ENCODE measurements at regions of chr14 and their contacts with region 1.

Region 1: DNA sequence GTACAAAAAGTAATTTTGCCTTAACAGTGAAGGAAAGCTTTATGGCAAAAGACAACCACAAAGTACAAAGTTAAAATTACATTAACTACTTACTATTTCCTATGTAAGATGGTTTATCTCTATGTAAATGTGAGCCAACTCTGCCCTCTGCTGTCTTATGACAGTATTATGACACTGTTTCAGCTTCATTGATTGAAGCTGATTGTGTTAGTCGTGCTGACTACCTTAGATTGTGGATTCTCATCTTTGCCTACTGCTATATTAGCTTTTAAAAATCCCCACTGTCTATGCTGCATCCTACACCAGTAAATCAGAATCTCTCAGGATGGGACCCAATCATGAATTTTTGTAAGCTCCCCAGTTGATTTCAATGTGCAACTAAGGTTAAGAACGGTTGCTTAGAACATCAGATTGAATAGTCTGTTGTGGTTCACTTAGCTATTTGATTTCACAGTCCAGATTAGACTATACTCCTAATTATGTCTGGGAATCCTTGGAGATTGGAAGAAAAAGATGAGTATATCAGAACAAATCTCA is 12.2 kb upstream of the SPTB start:
- DNase-seq: peak; percentile 85
- H3K4me3 Mint-ChIP-seq: no peak overlapping the region
- H3K27ac Mint-ChIP-seq: no peak overlapping the region
- H3K4me1 Mint-ChIP-seq: peaks cover 2% of the 10 kb centered on the region
- H3K27me3 Mint-ChIP-seq: peaks cover 36% of the 10 kb centered on the region

Region 2: GRCh38 chr14:64671591-64671990 is 220.3 kb before region 1 on chr14:
- intact Hi-C with region 1: loop called (anchors 5 kb)
- DNase-seq: peak; percentile 78
- H3K4me3 Mint-ChIP-seq: no peak overlapping the region
- H3K27ac Mint-ChIP-seq: no peak overlapping the region
- H3K4me1 Mint-ChIP-seq: peaks cover 32% of the 10 kb centered on the region
- H3K27me3 Mint-ChIP-seq: peaks cover 18% of the 10 kb centered on the region

Region 3: DNA sequence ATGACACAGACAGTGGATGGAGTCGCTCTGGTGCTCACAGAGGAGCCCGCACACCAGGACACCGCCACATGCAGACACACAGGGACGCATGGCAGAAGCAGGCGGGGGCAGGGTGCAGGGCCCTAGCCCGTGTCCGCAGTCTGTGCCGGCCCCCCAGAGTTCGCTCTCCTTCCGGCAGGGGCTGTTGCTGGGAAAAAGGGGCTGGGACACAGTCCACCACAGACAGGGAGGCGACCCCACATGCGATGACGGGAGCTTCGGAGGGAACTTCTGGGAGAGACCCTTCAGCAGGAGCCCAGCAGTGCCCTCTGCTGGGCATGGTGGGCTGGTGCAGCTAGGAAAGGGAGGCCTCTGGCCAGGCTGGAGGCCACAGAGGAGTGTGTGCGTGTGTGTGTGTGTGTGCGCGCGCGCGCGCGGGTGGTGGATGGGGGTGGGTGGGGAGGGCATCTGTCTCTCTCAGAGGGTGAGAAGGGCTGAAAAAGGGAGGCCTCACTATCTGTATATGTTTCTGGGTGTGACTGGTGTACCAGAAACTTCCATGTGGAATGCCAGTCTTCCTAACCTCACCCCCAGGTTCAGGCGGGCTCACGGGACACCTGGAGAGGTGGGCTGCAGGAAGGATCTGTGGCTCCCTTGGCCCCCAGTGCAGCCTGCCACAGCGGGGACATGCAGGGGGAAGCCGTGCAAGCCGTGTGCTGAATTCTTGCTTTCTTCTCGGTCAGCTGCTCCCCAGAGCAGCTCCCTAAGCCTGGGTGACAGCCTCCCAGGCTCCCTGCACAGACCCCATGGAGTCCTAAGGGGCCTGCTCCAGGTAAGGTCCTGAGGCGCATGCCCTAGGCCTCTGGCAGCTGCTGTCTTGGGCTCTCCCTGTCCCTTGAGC is 127.0 kb before region 1 on chr14:
- intact Hi-C with region 1: loop called (anchors 5 kb)
- DNase-seq: peak; percentile 92
- H3K4me3 Mint-ChIP-seq: peak overlapping the region; percentile 37
- H3K27ac Mint-ChIP-seq: no peak overlapping the region
- H3K4me1 Mint-ChIP-seq: peaks cover 38% of the 10 kb centered on the region
- H3K27me3 Mint-ChIP-seq: peaks cover 17% of the 10 kb centered on the region

Region 4: DNA sequence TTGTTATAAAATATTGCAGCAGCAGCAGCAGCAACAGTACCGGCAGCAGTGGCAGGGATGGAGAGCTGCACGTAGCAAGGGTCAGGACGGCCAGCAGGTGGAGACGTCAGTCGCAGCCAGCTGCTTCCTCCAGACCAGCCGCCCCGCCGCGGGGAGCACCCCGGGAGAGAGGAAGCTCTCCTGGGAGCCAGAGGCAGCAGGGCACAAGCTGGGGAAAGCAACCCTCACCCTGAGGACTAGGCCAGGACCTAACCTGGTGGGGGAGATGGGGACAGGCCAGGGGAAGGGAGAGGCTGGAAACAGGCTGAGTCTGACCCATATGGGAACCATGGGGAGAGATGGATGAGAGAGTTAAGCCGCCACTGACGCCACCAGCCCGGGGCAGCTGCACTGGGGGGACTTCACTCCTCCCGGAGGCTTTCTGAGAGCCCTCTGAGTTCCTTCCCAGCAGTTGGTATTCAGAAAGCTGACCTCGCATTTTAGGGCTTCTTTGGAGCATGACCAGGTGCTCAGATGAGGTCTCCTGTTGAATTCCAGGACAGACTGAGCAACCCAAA is 68.5 kb before region 1 on chr14:
- intact Hi-C with region 1: loop called (anchors 5 kb)
- DNase-seq: peak; percentile 89
- H3K4me3 Mint-ChIP-seq: peak overlapping the region; percentile 53
- H3K27ac Mint-ChIP-seq: no peak overlapping the region
- H3K4me1 Mint-ChIP-seq: peaks cover 4% of the 10 kb centered on the region
- H3K27me3 Mint-ChIP-seq: peaks cover 44% of the 10 kb centered on the region